ENCODE measurements at regions of chr22 and their contacts with region 1.

Region 1: GRCh38 chr22:41091132-41092022 is 1.0 kb upstream of the EP300 start:
- DNase-seq: peak; percentile 98 to 100
- H3K4me3 ChIP-seq: peak overlapping the region; percentile 99
- H3K27ac ChIP-seq: peak overlapping the region; percentile 100
- H3K4me1 ChIP-seq: peaks cover 0 to 31% (median 13%) of the 10 kb centered on the region in 4 donors
- H3K27me3 ChIP-seq: no peaks in the 10 kb centered on the region
- CTCF ChIP-seq: no peak

Region 2: GRCh38 chr22:40904101-40904500 is 187.3 kb before region 1 on chr22:
- intact Hi-C with region 1: no loop called
- DNase-seq: no peak
- H3K4me3 ChIP-seq: no peak overlapping the region
- H3K27ac ChIP-seq: no peak overlapping the region
- H3K4me1 ChIP-seq: no peaks in the 10 kb centered on the region
- H3K27me3 ChIP-seq: no peaks in the 10 kb centered on the region
- CTCF ChIP-seq: no peak

Region 3: DNA sequence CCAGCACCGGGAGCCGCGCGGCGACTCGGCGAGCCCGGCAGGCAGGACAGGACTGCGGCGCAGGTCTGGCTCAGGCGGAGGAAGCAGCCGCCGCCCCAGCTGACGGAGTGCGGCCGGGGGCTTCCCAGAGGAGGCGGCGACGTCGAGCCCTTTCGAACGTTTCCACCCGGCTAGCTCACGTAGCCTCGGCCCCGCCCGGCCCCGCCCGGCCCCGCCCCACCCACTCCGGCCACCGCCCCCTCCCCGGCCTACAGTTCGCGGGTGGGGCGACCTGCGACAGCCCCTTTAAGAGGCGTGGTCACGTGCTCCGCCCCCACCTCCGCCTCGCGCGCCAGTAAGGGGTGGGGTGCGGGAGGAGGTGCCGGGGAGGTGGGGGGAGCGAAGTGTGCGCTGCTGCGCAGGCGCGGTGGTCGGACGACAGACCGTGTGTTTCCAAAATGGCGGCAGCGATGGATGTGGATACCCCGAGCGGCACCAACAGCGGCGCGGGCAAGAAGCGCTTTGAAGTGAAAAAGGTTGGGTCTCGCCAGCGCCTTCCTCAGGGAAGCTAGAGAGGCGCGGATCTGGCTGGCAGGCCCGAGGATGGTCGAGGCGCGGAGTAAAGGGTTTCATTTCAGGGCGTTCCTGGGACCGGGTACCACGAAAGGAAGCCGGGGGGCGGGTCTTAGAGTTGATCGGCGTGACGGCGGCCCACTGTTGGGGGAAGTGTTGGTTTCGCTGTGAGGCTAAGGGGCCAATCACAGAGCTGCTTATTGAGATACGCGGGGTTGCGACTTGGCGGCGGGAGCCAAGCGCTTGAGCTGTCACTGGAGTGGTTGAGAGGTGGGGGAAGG is 140.2 kb before region 1 on chr22 and contains the start of gene RBX1:
- intact Hi-C with region 1: loop called (anchors 1 kb)
- DNase-seq: peak; percentile 98 to 99
- H3K4me3 ChIP-seq: peak within 1 kb of the TSS; percentile 73 to 85
- H3K27ac ChIP-seq: peak within 1 kb of the TSS; percentile 94 to 98
- H3K4me1 ChIP-seq: peaks cover 0 to 20% (median 7%) of the 10 kb centered on the region in 4 donors
- H3K27me3 ChIP-seq: no peaks in the 10 kb centered on the region
- CTCF ChIP-seq: no peak

Region 4: GRCh38 chr22:41022470-41023298 is 68.7 kb before region 1 on chr22:
- intact Hi-C with region 1: loop called (anchors 5 kb)
- DNase-seq: peak; percentile 91 to 96
- H3K4me3 ChIP-seq: peak overlapping the region; percentile 70 to 78
- H3K27ac ChIP-seq: peak overlapping the region; percentile 95 to 99
- H3K4me1 ChIP-seq: peaks cover 0 to 12% (median 8%) of the 10 kb centered on the region in 4 donors
- H3K27me3 ChIP-seq: no peaks in the 10 kb centered on the region
- CTCF ChIP-seq: no peak

Region 5: GRCh38 chr22:41197038-41197972 is 105.9 kb after region 1 on chr22:
- intact Hi-C with region 1: loop called (anchors 10 kb)
- DNase-seq: peak; percentile 71 to 86
- H3K4me3 ChIP-seq: peak overlapping the region; percentile 57 to 90
- H3K27ac ChIP-seq: peak overlapping the region in 1 of 2 donors; percentile 42
- H3K4me1 ChIP-seq: peaks cover 0 to 17% (median 11%) of the 10 kb centered on the region in 4 donors
- H3K27me3 ChIP-seq: no peaks in the 10 kb centered on the region
- CTCF ChIP-seq: peak in 1 of 2 experiments; percentile 25

Region 6: DNA sequence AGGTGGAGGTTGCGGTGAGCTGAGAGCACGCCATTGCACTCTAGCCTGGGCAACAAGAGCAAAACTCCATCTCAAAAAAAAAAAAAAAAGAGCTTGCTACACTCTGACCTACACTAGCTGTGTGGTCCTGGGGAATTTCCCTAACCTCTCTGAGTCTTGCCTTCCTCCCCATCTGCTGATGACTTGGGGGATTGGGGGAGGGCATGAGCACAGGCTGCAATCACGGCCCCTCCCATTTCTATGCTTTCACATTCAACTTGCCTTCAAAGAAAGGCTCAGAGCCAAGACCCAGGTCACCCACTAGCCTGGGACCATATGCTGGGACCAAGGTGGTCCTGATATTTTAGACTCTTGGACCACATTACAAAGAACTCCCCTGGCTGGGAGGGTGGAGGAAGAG is 250.6 kb after region 1 on chr22:
- intact Hi-C with region 1: no loop called
- DNase-seq: no peak
- H3K4me3 ChIP-seq: no peak overlapping the region
- H3K27ac ChIP-seq: no peak overlapping the region
- H3K4me1 ChIP-seq: no peaks in the 10 kb centered on the region
- H3K27me3 ChIP-seq: no peaks in the 10 kb centered on the region
- CTCF ChIP-seq: no peak

Region 7: DNA sequence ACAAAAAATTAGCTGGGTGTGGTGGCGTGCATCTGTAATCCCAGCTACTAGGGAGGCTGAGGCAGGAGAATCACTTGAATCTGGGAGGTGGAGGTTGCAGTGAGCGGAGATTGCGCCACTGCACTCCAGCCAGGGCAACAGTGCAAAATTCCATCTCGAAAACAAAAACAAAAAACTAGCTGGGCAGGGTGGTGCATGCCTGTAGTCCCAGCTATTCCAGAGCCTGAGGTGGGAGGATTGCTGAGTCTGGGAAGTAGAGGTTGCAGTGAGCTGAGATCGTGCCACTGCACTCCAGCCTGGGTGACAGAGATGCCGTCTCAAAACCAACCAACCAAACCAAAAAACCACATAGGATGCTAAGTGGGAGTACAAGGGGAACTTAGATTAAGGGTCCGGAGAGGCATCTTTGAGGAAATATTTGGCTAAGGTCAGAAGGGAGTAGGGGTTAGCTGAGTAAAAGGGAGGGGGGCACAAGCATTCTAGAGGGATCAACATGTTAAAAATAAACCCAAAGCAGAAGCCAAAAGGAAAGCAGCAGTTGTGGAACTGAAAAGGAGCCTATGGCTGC is 366.9 kb after region 1 on chr22:
- intact Hi-C with region 1: no loop called
- DNase-seq: no peak
- H3K4me3 ChIP-seq: no peak overlapping the region
- H3K27ac ChIP-seq: no peak overlapping the region
- H3K4me1 ChIP-seq: no peaks in the 10 kb centered on the region
- H3K27me3 ChIP-seq: no peaks in the 10 kb centered on the region
- CTCF ChIP-seq: no peak

Region 8: DNA sequence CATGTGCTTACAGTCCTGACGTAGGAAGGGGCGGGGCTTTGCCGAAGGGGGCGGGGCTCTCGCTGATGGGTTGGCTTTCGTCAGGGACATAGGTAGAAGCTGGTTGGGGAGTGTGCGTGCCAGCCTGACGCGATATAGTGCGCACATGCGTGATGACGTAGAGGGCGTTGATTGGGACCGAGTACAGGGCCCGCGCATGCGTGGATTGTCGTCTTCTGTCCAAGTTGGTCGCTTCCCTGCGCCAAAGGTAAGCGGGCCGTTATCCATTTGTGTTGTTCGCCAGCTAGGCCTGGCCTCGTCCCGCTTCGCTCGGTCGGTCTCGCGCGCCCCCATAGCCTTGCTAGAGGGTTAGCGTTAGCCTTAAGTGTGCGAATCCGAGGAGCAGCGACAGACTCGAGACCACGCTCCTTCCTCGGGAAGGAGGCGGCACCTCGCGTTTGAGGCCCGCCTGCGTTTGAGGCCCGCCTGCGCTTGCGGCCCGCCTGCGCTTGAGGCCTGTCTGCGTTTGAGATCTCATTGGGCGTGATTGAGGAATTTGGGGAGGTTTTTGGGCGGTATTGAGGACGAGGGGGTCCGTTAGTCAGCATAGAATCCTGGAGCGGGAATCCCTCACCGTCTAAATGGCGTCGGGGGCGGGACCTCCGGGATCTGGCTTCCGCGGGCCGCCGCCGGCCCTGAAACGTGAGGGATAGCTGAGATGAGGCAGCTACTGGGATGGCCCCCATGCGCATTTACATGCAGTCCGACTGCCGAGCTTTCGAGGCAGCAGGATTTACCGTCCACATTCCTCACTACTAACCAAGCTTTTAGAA is 529.9 kb after region 1 on chr22 and contains the start of gene XRCC6:
- intact Hi-C with region 1: no loop called
- DNase-seq: peak; percentile 100
- H3K4me3 ChIP-seq: peak within 1 kb of the TSS; percentile 92 to 96
- H3K27ac ChIP-seq: peak within 1 kb of the TSS; percentile 97 to 98
- H3K4me1 ChIP-seq: peaks cover 0 to 32% (median 23%) of the 10 kb centered on the region in 4 donors
- H3K27me3 ChIP-seq: no peaks in the 10 kb centered on the region
- CTCF ChIP-seq: no peak